HepG2 (cell line): ENCODE measurements at regions of chr12 and their contacts with region 1.

Region 1: GRCh38 chr12:89051065-89051677 is 301.1 kb downstream of the DUSP6 start:
- DNase-seq: peak; percentile 38
- ATAC-seq: peak; percentile 69
- H3K4me3 ChIP-seq: no peak overlapping the region
- H3K27ac ChIP-seq: no peak overlapping the region
- H3K4me1 ChIP-seq: no peaks in the 10 kb centered on the region
- H3K27me3 ChIP-seq: no peaks in the 10 kb centered on the region
- CTCF ChIP-seq: peak; percentile 79
- EP300 ChIP-seq: no peak
- POLR2A ChIP-seq: no peak
- RAD21 ChIP-seq: peak; percentile 65

Region 2: DNA sequence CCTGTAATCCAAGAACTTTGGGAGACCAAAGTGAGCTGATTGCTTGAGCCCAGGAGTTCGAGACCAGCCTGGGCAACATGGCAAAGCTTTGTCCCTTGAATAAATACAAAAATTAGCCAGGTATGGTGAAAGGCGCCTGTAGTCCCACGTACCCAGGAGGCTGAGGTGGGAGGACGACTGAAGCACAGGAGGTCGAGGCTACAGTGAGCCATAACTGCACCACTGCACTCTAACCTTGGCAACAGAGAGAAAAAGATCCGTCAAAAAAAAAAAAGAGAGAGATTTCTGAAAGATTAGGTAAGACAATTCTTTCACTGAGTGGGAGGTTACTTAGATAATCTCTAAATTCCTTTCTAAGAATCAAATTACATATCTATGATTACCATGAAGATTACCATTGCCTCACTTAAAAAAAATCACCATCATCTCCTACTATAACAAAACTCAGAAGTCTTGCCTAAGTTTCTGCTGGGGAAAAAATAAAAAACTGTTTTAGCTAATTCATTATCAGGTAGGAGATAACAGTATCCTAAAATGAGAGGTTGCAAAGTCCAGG is 65.6 kb before region 1 on chr12:
- CTCF ChIA-PET with region 1: no interaction called
- POLR2A ChIA-PET with region 1: no interaction called
- in situ Hi-C with region 1: no loop called
- intact Hi-C with region 1: no loop called
- DNase-seq: no peak
- ATAC-seq: no peak
- H3K4me3 ChIP-seq: no peak overlapping the region
- H3K27ac ChIP-seq: no peak overlapping the region
- H3K4me1 ChIP-seq: no peaks in the 10 kb centered on the region
- H3K27me3 ChIP-seq: no peaks in the 10 kb centered on the region; a peak in 1 of 5 replicates
- CTCF ChIP-seq: no peak
- EP300 ChIP-seq: no peak
- POLR2A ChIP-seq: no peak
- RAD21 ChIP-seq: no peak

Region 3: DNA sequence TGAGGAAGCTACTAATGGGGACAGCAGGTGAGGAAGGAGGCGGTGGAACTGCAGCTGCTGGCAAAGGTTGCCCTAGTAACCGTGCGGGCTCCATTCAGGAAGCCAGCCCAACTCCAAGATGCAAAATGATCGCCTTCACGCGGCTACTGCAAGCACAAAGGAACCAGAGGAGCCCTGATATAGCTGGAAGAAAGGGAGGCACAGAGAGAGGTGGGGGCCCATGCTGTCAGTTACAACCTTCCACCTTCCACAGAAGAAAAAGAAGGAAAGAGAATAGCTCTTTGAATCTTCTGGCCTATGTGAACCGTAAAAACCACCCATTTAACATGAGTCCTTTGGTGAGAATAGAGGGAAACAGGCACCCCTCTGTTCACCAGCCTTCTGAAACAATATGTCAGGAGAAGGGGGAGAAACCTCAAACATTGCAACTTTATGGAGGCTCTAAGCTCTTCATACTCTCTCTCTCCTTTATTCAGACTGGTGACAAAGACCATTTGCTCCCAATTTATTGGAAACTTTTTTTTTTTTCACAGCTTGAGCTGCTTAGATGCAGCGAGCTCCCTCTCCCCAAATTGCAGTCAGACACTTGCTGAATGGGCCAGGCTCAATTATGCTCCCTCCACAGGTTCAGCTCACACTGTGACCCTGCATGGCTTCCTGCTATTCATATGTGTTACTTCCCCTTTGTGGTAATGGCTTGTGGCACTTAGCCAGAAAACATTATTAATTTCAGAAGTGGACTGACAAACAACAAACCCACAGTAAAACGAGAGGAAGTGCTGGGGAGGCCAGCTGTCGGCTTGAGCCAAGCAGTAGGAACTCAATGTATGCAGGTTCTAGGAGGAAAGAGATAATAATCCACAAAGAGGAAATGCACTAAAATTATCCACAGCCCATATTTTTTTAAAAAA is 294.9 kb after region 1 on chr12:
- CTCF ChIA-PET with region 1: no interaction called
- POLR2A ChIA-PET with region 1: no interaction called
- in situ Hi-C with region 1: loop called (anchors 25 kb)
- intact Hi-C with region 1: loop called (anchors 2 kb)
- DNase-seq: no peak
- ATAC-seq: peak; percentile 41
- H3K4me3 ChIP-seq: 0 out of 6 replicates have a peak overlapping the region, but pooled peaks of 1 of the 3 experiments have one; percentile 7
- H3K27ac ChIP-seq: peak overlapping the region; percentile 89
- H3K4me1 ChIP-seq: peaks cover 66% of the 10 kb centered on the region
- H3K27me3 ChIP-seq: peaks cover 0 to 9% of the 10 kb centered on the region in 2 experiments; a peak in 1 of 5 replicates
- CTCF ChIP-seq: no peak
- EP300 ChIP-seq: no peak
- POLR2A ChIP-seq: no peak
- RAD21 ChIP-seq: no peak

Region 4: GRCh38 chr12:89461649-89462612 is 410.8 kb after region 1 on chr12:
- CTCF ChIA-PET with region 1: interaction called, 37 read pairs
- POLR2A ChIA-PET with region 1: no interaction called
- in situ Hi-C with region 1: loop called (anchors 5 kb)
- intact Hi-C with region 1: loop called (anchors 1 kb)
- DNase-seq: peak; percentile 44
- ATAC-seq: peak; percentile 80
- H3K4me3 ChIP-seq: no peak overlapping the region
- H3K27ac ChIP-seq: no peak overlapping the region
- H3K4me1 ChIP-seq: no peaks in the 10 kb centered on the region
- H3K27me3 ChIP-seq: no peaks in the 10 kb centered on the region
- CTCF ChIP-seq: peak; percentile 72
- EP300 ChIP-seq: no peak
- POLR2A ChIP-seq: no peak
- RAD21 ChIP-seq: peak; percentile 73